Right ventricle myocardium inferior (tissue), 1 donor: ENCODE measurements at regions of chr7 and their contacts with region 1.

Region 1: GRCh38 chr7:102390697-102391484 is 5.3 kb upstream of the PRKRIP1 start:
- DNase-seq: peak; percentile 85
- ATAC-seq: peak; percentile 85

Region 2: DNA sequence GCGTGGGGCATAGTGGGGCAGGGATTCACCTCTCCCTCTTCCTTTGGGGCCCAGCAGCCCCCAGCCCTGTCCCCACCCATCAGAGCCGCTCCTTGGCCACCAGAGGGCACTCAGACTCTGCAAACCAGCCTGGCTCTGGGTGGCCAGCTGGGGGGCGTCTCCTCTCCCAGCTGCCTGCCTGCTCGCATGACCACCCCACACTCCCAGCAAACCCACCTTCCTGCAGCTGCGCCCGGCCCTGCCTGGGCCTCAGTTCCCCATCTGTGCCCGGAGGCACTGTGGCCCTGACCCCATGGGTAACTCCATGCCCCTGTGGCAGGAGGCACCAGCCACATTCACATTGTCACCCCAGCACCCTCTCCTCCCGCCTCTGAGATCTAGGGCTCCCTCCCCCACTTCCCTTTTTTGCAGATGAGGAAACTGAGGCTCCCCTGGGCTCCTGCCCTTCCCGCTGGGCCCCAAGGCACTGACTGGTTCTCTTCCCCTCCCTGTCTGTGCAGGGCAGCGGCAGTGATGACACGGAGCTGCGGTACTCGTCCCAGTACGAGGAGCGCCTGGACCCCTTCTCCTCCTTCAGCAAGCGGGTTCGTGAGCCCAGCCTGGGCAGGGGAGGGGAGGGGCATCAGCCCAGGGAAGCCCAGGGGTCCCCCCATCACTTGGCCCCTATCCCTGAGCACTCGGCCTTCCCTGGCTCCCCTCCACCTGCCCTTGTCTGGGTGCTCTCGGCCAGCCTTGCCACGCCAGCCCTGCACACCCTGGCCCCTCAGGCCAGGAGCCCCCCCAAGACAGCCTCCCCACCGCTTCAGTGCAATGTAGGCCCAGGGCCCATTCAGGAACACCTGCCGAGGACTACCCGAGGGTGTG is 111.1 kb before region 1 on chr7:
- intact Hi-C with region 1: loop called (anchors 1 kb)
- DNase-seq: peak; percentile 77
- ATAC-seq: peak; percentile 75

Region 3: GRCh38 chr7:102425639-102426267 is 34.9 kb after region 1 on chr7:
- intact Hi-C with region 1: no loop called
- DNase-seq: peak; percentile 86
- ATAC-seq: peak; percentile 32

Region 4: GRCh38 chr7:102440078-102440795 is 49.3 kb after region 1 on chr7:
- intact Hi-C with region 1: no loop called
- DNase-seq: no peak
- ATAC-seq: peak; percentile 31

Region 5: DNA sequence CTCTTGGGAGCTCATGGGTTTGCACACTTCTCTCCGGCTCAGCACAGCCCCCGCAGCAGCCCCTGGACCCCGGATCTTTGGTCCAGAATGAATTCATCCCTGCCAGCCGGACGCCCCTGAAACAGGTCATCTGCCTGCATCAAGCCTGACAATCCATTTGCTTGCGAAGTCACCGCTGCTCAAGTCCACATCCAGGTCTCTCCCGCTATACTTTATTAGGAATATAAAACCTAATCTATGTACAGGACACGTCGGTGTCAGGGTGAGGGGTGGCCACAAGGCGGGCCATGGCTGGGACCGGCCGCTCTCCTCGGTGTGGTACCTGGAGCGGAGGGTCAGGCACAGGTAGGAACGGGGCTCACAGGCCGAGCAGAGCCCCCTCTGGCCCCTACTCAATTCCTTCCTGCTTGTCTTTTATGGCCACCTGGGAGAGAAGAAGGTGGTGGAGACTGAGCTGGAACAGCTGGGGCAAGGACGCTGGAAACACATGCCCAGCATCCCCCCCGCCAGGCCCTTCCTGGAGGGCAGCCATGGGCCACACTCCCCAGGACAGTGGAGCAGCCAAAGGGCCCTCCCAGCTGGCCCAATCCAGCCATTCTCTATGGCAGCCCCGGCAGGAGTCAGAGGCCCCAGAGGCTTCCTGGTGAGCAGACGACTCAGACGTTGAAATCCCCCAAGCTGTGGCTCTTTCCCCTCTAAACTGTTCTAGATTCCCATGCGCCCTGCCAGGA is 82.5 kb after region 1 on chr7:
- intact Hi-C with region 1: no loop called
- DNase-seq: no peak
- ATAC-seq: no peak